PC-9 (cell line): ENCODE measurements at regions of chr19 and their contacts with region 1.

Region 1: DNA sequence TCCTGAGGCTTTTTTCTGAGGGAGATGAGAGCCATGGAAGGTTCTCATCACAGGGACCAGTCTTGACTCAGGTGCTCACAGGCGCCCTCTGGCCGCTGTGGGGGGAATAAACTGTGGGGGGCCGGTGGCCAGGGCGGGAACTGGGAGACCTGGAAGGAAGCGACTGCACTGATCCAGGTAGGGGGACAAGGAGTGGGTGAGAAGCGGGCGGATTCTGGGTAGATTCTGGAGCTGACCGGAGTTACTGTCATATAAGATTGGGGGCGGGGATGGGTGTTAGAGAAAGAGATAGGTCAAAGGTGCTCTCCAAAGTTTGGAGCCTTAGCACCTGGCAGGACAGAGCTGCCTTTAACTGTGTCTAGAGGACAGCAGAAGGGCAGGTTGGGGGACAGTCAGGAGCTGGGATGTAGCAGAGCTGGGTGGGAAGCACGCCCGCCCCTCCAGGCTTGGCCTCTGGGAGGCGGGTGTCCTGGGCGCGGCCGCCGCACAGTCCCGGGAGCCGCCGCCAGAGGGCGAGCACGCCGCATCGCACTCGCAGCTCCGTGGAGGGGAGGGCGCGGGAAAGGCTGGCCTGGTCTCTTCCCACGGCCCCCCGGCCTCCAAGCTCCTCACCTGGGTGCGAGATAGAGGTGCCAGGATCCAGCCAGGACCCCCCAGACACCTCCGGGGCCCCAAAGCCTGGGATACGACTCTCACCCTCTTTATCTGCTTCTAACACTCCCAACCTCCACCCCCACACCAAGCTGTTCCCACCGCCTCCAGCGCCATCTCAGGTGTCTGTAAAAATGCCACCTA is 4.2 kb upstream of the DAND5 start:
- DNase-seq: peak; percentile 63 to 86
- H3K4me3 ChIP-seq: peak overlapping the region; percentile 58
- H3K27ac ChIP-seq: no peak overlapping the region
- H3K4me1 ChIP-seq: no peaks in the 10 kb centered on the region; the same call in 1 of the 2 replicates
- H3K27me3 ChIP-seq: no peaks in the 10 kb centered on the region
- CTCF ChIP-seq: peak; percentile 96

Region 2: DNA sequence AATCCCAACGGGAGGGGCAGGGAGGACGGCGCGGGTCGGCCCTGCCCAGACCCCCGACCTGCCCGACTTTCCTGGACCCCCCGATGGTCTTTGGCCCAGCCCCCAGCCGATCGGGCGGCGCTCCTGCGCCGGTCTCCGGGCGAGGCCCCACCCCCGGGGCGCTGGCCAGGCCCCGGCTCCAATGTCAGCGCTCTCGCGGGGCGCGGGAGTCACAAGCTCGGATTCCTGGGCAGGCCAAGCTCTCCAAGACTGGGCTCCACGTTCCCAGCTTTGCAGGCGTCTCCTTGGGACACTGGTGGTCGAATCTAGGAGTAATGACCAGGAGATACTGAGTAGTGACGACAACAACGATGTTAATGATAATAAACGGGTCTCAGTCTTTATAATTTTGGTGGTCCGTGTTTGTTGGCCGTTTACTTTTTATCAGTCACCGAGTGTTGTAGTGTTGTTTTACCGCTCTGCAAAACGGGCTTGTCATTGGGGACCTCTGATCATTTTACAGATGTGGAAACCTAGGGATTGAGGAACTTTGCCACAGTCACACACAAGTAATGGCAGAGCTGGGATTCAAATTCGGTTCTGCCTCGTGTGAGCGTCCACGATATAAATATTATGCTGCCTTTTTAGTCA is 19.0 kb before region 1 on chr19:
- CTCF ChIA-PET with region 1: interaction called, 12 read pairs
- POLR2A ChIA-PET with region 1: no interaction called
- intact Hi-C with region 1: no loop called
- DNase-seq: peak; percentile 70 to 73
- H3K4me3 ChIP-seq: peak overlapping the region; percentile 77
- H3K27ac ChIP-seq: peak overlapping the region; percentile 89
- H3K4me1 ChIP-seq: peaks cover 23% of the 10 kb centered on the region
- H3K27me3 ChIP-seq: no peaks in the 10 kb centered on the region
- CTCF ChIP-seq: no peak

Region 3: GRCh38 chr19:13010038-13010991 is 45.1 kb after region 1 on chr19:
- CTCF ChIA-PET with region 1: no interaction called
- POLR2A ChIA-PET with region 1: no interaction called
- intact Hi-C with region 1: no loop called
- DNase-seq: no peak
- H3K4me3 ChIP-seq: no peak overlapping the region
- H3K27ac ChIP-seq: no peak overlapping the region
- H3K4me1 ChIP-seq: peaks cover 13% of the 10 kb centered on the region
- H3K27me3 ChIP-seq: peaks cover 7% of the 10 kb centered on the region; the same call in 1 of the 2 replicates
- CTCF ChIP-seq: no peak

Region 4: GRCh38 chr19:13172068-13172896 is 207.1 kb after region 1 on chr19:
- CTCF ChIA-PET with region 1: no interaction called
- POLR2A ChIA-PET with region 1: no interaction called
- intact Hi-C with region 1: no loop called
- DNase-seq: peak; percentile 95 to 97
- H3K4me3 ChIP-seq: no peak overlapping the region; the same call in 1 of the 2 replicates
- H3K27ac ChIP-seq: peak overlapping the region; percentile 99
- H3K4me1 ChIP-seq: peaks cover 63% of the 10 kb centered on the region
- H3K27me3 ChIP-seq: no peaks in the 10 kb centered on the region
- CTCF ChIP-seq: no peak